ENCODE measurements at regions of chr9 and their contacts with region 1.

Region 1: GRCh38 chr9:129726322-129727160 is 26.3 kb downstream of the PTGES start:
- DNase-seq: peak; percentile 45
- H3K4me3 ChIP-seq: no peak overlapping the region
- H3K27ac ChIP-seq: no peak overlapping the region
- H3K4me1 ChIP-seq: no peaks in the 10 kb centered on the region
- H3K27me3 ChIP-seq: no peaks in the 10 kb centered on the region
- CTCF ChIP-seq: peak; percentile 87 to 97

Region 2: DNA sequence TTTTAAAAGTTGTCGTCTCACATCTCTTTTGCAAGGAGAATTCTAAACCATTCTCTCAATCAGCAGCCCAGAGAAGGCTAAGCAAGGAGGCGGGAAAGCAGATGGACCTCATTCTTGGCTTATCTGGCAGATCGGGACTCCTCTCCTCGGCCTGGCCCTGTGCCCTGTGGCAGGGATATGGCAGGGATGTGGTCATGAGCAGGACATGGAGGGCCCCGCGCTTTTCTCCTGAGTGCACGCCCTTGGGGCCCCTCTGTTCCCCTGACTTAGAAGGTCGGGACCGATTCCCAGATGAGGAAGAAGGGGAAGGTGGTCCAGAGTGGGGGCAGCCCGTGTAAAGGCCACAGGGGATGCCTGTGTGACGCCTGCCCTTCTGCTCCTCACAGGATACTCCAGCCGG is 678.5 kb before region 1 on chr9:
- CTCF ChIA-PET with region 1: interaction called, 3 read pairs
- dilution Hi-C with region 1: loop called (anchors 5 kb)
- in situ Hi-C with region 1: no loop called
- intact Hi-C with region 1: no loop called
- DNase-seq: no peak
- H3K4me3 ChIP-seq: no peak overlapping the region
- H3K27ac ChIP-seq: no peak overlapping the region
- H3K4me1 ChIP-seq: peaks cover 4% of the 10 kb centered on the region
- H3K27me3 ChIP-seq: no peaks in the 10 kb centered on the region
- CTCF ChIP-seq: no peak

Region 3: GRCh38 chr9:129131300-129132145 is 595.0 kb before region 1 on chr9:
- CTCF ChIA-PET with region 1: no interaction called
- dilution Hi-C with region 1: loop called (anchors 5 kb)
- in situ Hi-C with region 1: no loop called
- intact Hi-C with region 1: no loop called
- DNase-seq: peak; percentile 50
- H3K4me3 ChIP-seq: no peak overlapping the region
- H3K27ac ChIP-seq: no peak overlapping the region
- H3K4me1 ChIP-seq: no peaks in the 10 kb centered on the region
- H3K27me3 ChIP-seq: no peaks in the 10 kb centered on the region
- CTCF ChIP-seq: peak; percentile 99

Region 4: GRCh38 chr9:129641746-129642513 is 84.6 kb before region 1 on chr9 and contains the start of gene ASB6:
- CTCF ChIA-PET with region 1: no interaction called
- dilution Hi-C with region 1: no loop called
- in situ Hi-C with region 1: no loop called
- intact Hi-C with region 1: loop called (anchors 2 kb)
- DNase-seq: peak; percentile 95
- H3K4me3 ChIP-seq: peak within 1 kb of the TSS; percentile 72 to 94 (median 80)
- H3K27ac ChIP-seq: peak within 1 kb of the TSS; percentile 45
- H3K4me1 ChIP-seq: peaks cover 19% of the 10 kb centered on the region
- H3K27me3 ChIP-seq: no peaks in the 10 kb centered on the region
- CTCF ChIP-seq: peak; percentile 78 to 96
- total RNA-seq, gene ASB6: 21.4 to 28.2 TPM

Region 5: GRCh38 chr9:129676975-129677841 is 49.3 kb before region 1 on chr9:
- CTCF ChIA-PET with region 1: no interaction called
- dilution Hi-C with region 1: loop called (anchors 10 kb)
- in situ Hi-C with region 1: no loop called
- intact Hi-C with region 1: no loop called
- DNase-seq: no peak
- H3K4me3 ChIP-seq: no peak overlapping the region
- H3K27ac ChIP-seq: no peak overlapping the region
- H3K4me1 ChIP-seq: no peaks in the 10 kb centered on the region
- H3K27me3 ChIP-seq: peaks cover 10% of the 10 kb centered on the region
- CTCF ChIP-seq: no peak

Region 6: DNA sequence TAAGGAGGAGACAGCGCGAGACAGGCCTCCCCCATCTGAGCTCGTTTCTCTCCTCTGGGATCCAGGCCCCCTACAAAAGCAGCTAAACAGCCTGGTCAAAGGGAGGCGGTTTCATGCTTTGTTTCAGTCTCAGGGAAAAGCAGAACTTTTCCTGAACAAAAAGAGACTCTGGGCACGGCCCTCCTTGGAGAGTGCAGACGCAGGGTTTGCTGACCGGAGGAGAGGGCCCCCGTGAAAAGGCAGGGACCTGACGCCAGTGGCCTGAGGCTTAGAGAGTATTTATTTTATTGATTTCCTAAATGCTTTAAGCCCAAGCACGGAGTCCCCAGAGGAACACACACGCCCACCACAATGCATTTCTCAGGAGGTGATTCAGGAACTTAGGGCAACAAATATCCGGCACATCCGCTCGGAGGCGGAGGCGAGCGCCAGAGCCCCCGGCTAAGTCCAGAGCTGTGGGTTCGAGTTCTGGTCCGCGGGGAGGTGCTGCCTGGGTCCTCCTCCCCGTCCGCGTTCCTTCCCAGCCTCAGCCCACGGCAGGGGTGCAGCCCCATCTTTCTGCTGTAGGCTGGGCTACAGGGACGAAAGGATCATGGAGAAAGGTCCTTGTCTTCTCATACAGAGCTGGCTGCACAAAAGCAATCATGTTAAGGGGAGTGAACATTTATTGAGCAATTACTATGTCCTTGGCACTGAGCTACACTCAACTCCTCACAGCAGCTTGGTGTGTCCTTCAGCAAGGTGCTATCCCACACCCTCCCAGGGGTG is 13.7 kb before region 1 on chr9:
- CTCF ChIA-PET with region 1: no interaction called
- dilution Hi-C with region 1: no loop called
- in situ Hi-C with region 1: no loop called
- intact Hi-C with region 1: no loop called
- DNase-seq: no peak
- H3K4me3 ChIP-seq: no peak overlapping the region
- H3K27ac ChIP-seq: no peak overlapping the region
- H3K4me1 ChIP-seq: peaks cover 9% of the 10 kb centered on the region
- H3K27me3 ChIP-seq: no peaks in the 10 kb centered on the region
- CTCF ChIP-seq: no peak

Region 7: GRCh38 chr9:129776938-129777768 is 50.6 kb after region 1 on chr9:
- CTCF ChIA-PET with region 1: no interaction called
- dilution Hi-C with region 1: loop called (anchors 5 kb)
- in situ Hi-C with region 1: loop called in 1 of 2 experiments (anchors 5 kb)
- intact Hi-C with region 1: no loop called
- DNase-seq: peak; percentile 99
- H3K4me3 ChIP-seq: no peak overlapping the region
- H3K27ac ChIP-seq: peak overlapping the region; percentile 26
- H3K4me1 ChIP-seq: peaks cover 27% of the 10 kb centered on the region
- H3K27me3 ChIP-seq: no peaks in the 10 kb centered on the region
- CTCF ChIP-seq: no peak

Region 8: DNA sequence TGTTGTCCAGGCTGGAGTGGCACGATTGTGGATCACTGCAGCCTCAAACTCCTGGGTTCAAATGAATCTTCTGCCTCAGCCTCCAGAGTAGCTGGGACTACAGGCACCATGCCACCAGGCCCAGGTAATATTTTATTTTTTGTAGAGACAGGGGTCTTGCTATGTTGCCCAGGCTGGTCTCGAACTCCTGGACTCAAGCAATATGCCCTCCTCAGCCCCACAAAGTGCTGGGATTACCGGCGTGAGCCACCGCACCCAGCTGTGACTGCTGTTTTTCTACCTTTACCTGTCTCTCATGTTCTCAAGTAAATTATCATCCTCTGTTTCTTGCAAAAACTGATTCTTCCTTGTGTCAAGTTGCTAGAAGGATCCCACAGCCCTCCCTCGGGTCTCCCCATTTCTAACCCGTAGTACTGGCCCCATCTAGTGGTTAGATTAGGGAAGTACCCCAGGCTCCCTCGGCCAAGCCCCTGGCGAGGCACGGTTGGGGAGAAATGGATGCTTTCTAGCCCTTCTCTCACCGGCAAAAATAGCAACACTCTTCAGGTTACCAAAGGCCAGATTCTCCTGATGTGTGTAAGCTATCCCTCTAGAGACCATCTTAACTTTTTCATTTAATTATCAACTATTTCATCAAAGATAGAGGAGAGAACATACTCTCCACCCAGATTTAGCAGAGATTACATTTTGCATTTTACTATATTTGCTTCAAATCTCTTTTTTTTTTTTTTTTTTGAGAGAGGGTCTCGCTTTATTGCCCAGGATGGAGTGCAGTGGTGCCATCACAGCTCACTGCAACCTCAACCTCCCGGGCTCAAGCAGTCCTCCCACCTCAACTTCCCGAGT is 57.2 kb after region 1 on chr9:
- CTCF ChIA-PET with region 1: no interaction called
- dilution Hi-C with region 1: loop called (anchors 5 kb)
- in situ Hi-C with region 1: loop called in 1 of 2 experiments (anchors 5 kb)
- intact Hi-C with region 1: loop called (anchors 1 kb)
- DNase-seq: peak; percentile 54
- H3K4me3 ChIP-seq: no peak overlapping the region
- H3K27ac ChIP-seq: no peak overlapping the region
- H3K4me1 ChIP-seq: no peaks in the 10 kb centered on the region
- H3K27me3 ChIP-seq: no peaks in the 10 kb centered on the region
- CTCF ChIP-seq: peak; percentile 88 to 95

Region 9: DNA sequence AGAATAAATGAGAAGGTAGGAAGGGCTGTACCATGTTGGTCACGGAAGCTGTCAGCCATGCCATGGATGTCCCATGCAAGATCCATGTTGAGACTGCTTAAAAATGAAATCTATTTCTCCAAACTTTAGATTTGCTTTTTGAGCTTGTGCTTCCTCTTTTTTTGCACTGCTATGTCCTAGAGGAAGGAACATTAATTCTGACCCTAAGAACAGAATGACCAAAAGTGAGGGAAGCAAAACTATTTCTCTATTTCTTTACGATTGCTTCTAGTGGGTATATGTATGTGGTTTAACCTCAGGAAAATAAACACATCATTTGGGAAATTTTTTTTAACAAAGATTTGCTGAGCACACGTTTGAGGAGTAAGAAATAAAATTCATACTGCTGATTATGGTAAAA is 193.3 kb after region 1 on chr9:
- CTCF ChIA-PET with region 1: no interaction called
- dilution Hi-C with region 1: no loop called
- in situ Hi-C with region 1: no loop called
- intact Hi-C with region 1: no loop called
- DNase-seq: no peak
- H3K4me3 ChIP-seq: no peak overlapping the region
- H3K27ac ChIP-seq: no peak overlapping the region
- H3K4me1 ChIP-seq: no peaks in the 10 kb centered on the region
- H3K27me3 ChIP-seq: no peaks in the 10 kb centered on the region
- CTCF ChIP-seq: no peak

Measured in mammary epithelial cell (primary cell).